Head of caudate nucleus (tissue), 42 donors: ENCODE measurements at regions of chr12 and their contacts with region 1.

Region 1: GRCh38 chr12:6084261-6084968 is 40.1 kb downstream of the VWF start:
- DNase-seq: peak in 24 of 42 donors; percentile 15 to 68 (median 37)

Region 2: GRCh38 chr12:6135071-6135470 is 50.7 kb after region 1 on chr12:
- intact Hi-C with region 1: loop called (anchors 10 kb)
- DNase-seq: no peak

Region 3: GRCh38 chr12:6335451-6336078 is 251.2 kb after region 1 on chr12:
- intact Hi-C with region 1: no loop called
- DNase-seq: peak in 18 of 42 donors; percentile 23 to 79 (median 50)